ENCODE measurements at regions of chr2 and their contacts with region 1.

Region 1: DNA sequence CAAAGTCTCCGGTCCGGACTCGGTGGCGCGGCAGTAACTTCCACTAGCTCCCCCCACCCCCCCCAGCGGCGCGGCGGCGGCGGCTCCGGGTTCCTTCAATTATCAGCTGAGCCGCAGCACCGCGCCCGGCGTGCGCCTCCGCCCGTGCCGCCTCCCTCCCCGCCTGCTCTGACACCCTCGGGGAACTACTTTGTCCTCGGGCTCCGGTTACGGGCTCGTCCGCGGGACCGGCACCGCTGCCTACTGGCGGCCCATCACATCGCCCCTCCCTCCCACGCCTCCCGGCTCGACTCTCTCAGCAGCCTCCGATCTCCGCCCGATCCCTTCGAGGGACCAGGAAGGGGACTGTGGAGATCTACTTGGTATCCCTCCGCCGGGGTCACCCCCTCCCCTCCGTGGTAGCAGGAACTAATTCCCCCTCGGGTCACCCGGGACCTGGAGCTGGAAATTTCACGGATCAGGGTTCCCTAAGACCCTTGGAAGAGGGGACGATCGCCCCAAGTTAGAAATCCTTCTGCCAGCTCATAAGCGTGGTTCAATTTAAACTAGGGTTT is at the start of gene TRIP12:
- DNase-seq: peak; percentile 82 to 96 (median 90)

Region 2: GRCh38 chr2:229800997-229801754 is 120.8 kb before region 1 on chr2:
- intact Hi-C with region 1: loop called (anchors 5 kb)
- DNase-seq: peak; percentile 16 to 85 (median 63)

Region 3: GRCh38 chr2:229974266-229974665 is 52.3 kb after region 1 on chr2:
- intact Hi-C with region 1: no loop called
- DNase-seq: no peak

Region 4: GRCh38 chr2:230124757-230125431 is 202.9 kb after region 1 on chr2:
- intact Hi-C with region 1: no loop called
- DNase-seq: peak in 38 of 42 donors; percentile 4 to 65 (median 36)

Measured in head of caudate nucleus (tissue), 42 donors.